Dorsolateral prefrontal cortex (tissue), 120 donors: ENCODE measurements at regions of chr2 and their contacts with region 1.

Region 1: GRCh38 chr2:45643543-45644542 is 7.6 kb upstream of the PRKCE start:
- DNase-seq: peak in 9 of 10 donors; percentile 30 to 85 (median 51)
- H3K4me3 ChIP-seq: peak overlapping the region; percentile 35 to 88 (median 66)
- H3K27ac ChIP-seq: peak overlapping the region in 5 of 59 donors; percentile 27 to 76 (median 63)
- H3K27me3 ChIP-seq: peaks cover 0 to 4% (median 0%) of the 10 kb centered on the region in 45 donors
- CTCF ChIP-seq: peak; percentile 80 to 100 (median 97)

Region 2: DNA sequence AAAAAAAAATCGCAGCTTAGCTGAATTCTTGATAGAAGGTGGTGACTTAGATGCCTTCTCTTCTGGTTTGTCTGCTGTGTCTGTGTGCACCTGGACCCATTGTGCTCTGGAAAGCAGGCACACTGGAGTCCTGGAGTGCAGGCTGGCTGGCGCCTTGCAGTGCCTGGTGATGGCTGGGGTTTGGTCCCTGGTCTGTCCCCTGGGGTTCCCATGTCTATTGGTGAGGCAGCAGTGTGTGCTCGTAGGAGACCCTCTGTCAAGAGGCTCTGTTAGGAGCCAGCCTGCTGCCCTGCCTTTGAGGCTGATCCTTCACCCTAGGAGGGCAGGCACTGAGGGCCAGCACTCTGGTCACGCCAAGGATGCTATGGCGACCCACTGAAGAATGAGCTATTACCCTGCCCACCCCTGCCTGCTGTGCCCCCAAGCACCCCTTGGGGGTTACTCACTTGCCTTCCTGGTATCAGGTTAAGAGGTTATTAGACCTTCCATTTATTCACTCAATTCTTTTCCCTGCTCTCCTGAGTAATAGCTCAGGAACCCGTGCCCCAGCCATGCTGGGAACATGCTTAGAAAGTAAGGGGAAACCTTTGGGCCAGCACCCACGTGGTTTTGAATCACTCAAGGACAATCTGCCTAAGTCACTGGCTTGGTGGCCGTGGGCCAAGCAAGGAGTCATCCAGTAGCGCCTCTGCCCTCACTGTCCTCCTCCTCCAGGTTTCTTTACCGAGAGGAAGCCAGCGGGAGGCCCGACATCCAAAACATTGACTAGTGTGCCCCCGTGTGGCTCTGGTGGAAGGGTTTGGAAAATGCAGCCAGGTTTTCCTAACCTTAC is 292.2 kb after region 1 on chr2:
- intact Hi-C with region 1: loop called (anchors 1 to 2 kb)
- DNase-seq: peak; percentile 64 to 90 (median 86)
- H3K4me3 ChIP-seq: peak overlapping the region in 32 of 59 donors; percentile 1 to 46 (median 23)
- H3K27ac ChIP-seq: peak overlapping the region in 18 of 59 donors; percentile 4 to 69 (median 30)
- H3K27me3 ChIP-seq: no peaks in the 10 kb centered on the region
- CTCF ChIP-seq: peak; percentile 65 to 94 (median 85)